ENCODE measurements at regions of chr1 and their contacts with region 1.

Region 1: DNA sequence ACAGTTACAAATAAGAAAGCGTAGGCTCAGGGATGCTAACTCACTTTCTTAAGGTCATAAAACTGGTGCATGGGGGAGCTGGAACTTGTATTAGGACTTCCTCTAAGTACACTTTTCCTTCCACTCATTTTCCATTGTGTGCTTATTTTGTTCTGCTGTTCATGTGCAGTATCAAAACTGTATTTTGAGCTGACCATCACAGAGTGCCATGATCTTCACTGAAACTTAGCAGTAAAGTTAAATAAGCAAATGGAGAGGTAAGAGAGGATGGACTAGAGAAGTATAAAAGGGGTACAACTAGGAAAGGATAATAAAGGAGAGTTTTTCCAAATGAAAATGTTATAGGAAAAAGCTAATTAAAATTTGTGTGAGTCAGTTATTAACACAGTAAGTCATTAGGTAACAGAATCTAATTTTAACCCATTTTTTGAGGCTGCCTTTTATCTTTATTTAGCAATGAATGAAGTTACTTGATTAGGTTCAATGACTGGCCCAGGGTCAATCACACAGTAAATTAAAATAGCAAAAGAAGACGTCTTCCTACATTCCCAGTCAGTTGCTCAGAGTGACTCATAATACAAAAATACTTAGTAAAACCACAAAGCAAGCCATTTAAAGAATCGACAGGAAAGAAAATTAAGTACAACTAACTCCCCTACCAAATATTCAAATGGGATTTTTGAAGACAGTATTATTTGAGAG is 165.8 kb upstream of the C1orf105 start:
- DNase-seq: no peak
- ATAC-seq: no peak
- H3K4me3 ChIP-seq: no peak overlapping the region
- H3K4me3 Mint-ChIP-seq: peak overlapping the region in 1 of 10 donors; percentile 30
- H3K27ac ChIP-seq: no peak overlapping the region
- H3K27ac Mint-ChIP-seq: peak overlapping the region in 4 of 9 donors; percentile 13 to 73 (median 24)
- H3K4me1 ChIP-seq: no peaks in the 10 kb centered on the region
- H3K4me1 Mint-ChIP-seq: peaks cover 2 to 22% (median 18%) of the 10 kb centered on the region in 7 donors
- H3K27me3 ChIP-seq: no peaks in the 10 kb centered on the region
- H3K27me3 Mint-ChIP-seq: no peaks in the 10 kb centered on the region

Region 2: DNA sequence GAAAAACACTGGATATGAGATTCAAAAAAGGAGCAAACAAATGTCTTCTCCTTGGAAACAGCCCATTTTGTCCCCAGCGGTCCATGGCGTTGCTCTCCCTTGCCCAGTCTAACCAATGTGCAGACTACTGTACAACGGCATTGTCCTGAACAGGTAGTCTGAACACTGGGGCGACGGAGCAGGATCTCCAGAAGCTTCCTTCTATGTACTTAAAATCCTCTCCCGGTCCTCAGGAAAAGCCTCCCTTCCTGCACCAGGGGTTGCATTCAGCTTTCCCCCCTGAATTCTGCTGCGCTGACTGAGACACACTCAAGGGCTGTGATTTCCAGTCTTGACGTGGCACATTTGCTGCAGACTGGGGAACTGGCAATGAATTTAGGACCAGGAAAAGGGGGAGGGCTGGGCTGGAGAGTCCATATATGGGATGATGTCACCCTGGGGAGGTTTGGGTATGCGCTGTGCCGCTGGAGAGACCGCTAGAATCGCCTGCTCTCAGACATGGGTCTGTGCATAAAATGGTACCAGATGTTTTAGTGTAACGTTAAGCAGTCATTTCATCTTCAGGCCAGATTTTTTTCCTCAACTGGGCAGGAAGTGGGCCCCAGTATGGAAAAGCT is 110.1 kb before region 1 on chr1:
- CTCF ChIA-PET with region 1: no interaction called
- POLR2A ChIA-PET with region 1: no interaction called
- intact Hi-C with region 1: loop called in 1 of 2 experiments (anchors 5 kb)
- DNase-seq: no peak
- ATAC-seq: no peak
- H3K4me3 ChIP-seq: no peak overlapping the region
- H3K4me3 Mint-ChIP-seq: no peak overlapping the region
- H3K27ac ChIP-seq: no peak overlapping the region
- H3K27ac Mint-ChIP-seq: no peak overlapping the region
- H3K4me1 ChIP-seq: no peaks in the 10 kb centered on the region
- H3K4me1 Mint-ChIP-seq: peaks cover 0 to 16% (median 0%) of the 10 kb centered on the region in 7 donors
- H3K27me3 ChIP-seq: no peaks in the 10 kb centered on the region
- H3K27me3 Mint-ChIP-seq: no peaks in the 10 kb centered on the region

Region 3: GRCh38 chr1:172269644-172270043 is 15.0 kb after region 1 on chr1:
- CTCF ChIA-PET with region 1: no interaction called
- POLR2A ChIA-PET with region 1: no interaction called
- intact Hi-C with region 1: loop called in 1 of 2 experiments (anchors 2 kb)
- DNase-seq: no peak
- ATAC-seq: no peak
- H3K4me3 ChIP-seq: no peak overlapping the region
- H3K4me3 Mint-ChIP-seq: peak overlapping the region in 1 of 10 donors; percentile 18
- H3K27ac ChIP-seq: no peak overlapping the region
- H3K27ac Mint-ChIP-seq: peak overlapping the region in 2 of 9 donors; percentile 31 to 71
- H3K4me1 ChIP-seq: no peaks in the 10 kb centered on the region
- H3K4me1 Mint-ChIP-seq: peaks cover 0 to 43% (median 0%) of the 10 kb centered on the region in 7 donors
- H3K27me3 ChIP-seq: no peaks in the 10 kb centered on the region
- H3K27me3 Mint-ChIP-seq: no peaks in the 10 kb centered on the region

Measured in naive thymus-derived CD4-positive, alpha-beta T cell (primary cell).